Activated CD4-positive, alpha-beta T cell treated with anti-CD3 and anti-CD28 coated beads, Interleukin-2, amount 10 ng/mL, durations not matched to agents 24 days and 14 days (primary cell): ENCODE measurements at regions of chr12 and their contacts with region 1.

Region 1: GRCh38 chr12:51083126-51083833 is at the start of gene CSRNP2:
- DNase-seq: peak; percentile 98
- H3K4me3 Mint-ChIP-seq: peak within 1 kb of the TSS; percentile 95
- H3K27ac Mint-ChIP-seq: peak within 1 kb of the TSS; percentile 91
- H3K4me1 Mint-ChIP-seq: peaks cover 29% of the 10 kb centered on the region
- H3K27me3 Mint-ChIP-seq: no peaks in the 10 kb centered on the region
- total RNA-seq, gene CSRNP2: 22.7 and 22.9 TPM in 2 replicates

Region 2: DNA sequence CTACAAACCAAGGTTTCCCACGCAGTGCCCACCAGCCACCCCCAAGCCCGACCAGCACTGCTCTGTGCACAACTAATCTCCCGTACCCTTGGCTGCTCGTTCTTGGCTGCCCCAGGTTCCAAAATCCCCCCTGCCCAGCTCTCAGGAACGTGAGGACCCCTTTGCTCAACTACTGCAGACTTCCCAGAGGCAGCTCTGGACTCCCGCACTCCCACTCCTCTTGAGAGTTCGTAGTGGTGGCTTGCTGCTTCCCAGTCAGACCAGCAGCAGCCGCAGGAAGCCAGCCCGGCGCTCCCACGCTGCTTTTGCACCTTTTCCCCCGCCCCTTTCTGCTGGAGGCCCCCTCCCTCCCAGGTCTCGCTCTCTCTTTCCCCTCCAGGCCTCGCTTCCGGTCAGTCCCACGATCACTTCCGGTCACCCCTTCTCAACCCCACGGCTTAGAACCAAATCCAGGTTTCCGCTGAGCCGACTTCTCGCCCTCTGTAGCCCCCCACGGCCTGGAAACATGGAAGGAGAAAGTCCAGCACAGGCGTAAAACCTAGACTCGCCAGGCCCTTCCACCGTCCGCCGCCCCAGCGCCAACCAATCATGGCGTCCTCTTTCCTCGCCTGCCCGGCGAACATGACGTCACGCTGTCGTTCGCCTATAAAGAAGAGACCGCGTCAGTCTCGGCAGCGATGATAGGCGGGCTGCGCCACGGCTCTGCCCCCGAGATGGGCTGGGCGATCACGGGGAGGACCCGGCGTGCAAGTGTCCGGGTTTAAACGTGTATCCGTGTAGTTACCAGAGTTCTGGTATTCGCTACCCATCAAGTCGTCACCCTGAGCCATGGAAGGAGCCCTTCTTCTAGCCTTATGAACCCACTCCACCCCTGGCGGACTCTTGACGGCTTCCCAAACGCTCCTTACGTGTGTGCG is 89.5 kb after region 1 on chr12 and contains the start of gene TFCP2:
- intact Hi-C with region 1: loop called (anchors 2 kb)
- DNase-seq: peak; percentile 98
- H3K4me3 Mint-ChIP-seq: peak within 1 kb of the TSS; percentile 80
- H3K27ac Mint-ChIP-seq: peak within 1 kb of the TSS; percentile 86
- H3K4me1 Mint-ChIP-seq: peaks cover 12% of the 10 kb centered on the region
- H3K27me3 Mint-ChIP-seq: no peaks in the 10 kb centered on the region
- total RNA-seq, gene TFCP2: 43.1 and 46.3 TPM in 2 replicates

Region 3: GRCh38 chr12:51217968-51218606 is 134.8 kb after region 1 on chr12 and contains the start of gene POU6F1:
- intact Hi-C with region 1: loop called (anchors 5 kb)
- DNase-seq: peak; percentile 90
- H3K4me3 Mint-ChIP-seq: peak within 1 kb of the TSS; percentile 85
- H3K27ac Mint-ChIP-seq: peak within 1 kb of the TSS; percentile 88
- H3K4me1 Mint-ChIP-seq: peaks cover 13% of the 10 kb centered on the region
- H3K27me3 Mint-ChIP-seq: no peaks in the 10 kb centered on the region
- total RNA-seq, gene POU6F1: 5.1 and 9.0 TPM in 2 replicates

Region 4: DNA sequence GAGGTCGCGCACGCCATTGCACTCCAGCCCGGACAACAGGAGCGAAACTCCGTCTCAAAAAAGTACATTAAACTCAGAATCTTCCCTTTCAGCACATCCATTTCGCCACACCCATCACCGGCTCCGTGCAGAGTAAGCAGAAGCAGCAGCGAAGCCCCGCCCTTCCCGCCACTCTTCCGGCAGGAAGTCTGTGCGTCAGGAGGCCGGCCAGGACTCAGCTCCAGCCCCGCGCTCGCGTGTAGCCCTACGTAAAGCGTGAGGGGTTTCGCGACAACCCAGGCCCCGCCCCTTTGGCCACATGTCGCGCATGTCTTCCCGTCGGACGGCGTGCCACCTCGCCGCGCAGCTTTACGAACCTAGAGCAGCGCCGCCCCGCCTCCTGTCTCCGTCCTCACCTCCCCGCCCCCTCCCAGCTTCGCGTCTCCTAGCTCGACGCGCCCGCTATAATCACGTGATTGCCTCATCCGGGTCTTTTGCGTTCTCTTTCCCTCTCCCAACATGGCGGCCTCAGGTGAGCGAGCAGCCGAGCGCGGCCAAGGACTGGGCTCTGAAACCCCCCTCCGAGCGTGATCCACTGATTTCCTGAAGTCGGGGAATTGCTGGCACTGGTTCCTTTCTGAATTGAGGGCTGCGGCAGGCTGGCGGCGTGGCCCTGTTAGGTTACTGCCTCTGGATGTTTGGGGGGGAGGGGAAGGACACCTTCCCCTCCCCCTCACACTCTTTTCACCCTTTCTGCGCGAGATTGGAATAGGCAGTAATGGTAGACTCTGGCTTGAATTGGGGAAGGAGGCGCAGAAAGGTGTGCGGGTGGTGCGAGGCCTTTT is 1922.9 kb after region 1 on chr12 and contains the start of gene EIF4B:
- intact Hi-C with region 1: loop called (anchors 5 kb)
- DNase-seq: peak; percentile 100
- H3K4me3 Mint-ChIP-seq: peak within 1 kb of the TSS; percentile 88
- H3K27ac Mint-ChIP-seq: peak within 1 kb of the TSS; percentile 98
- H3K4me1 Mint-ChIP-seq: peaks cover 26% of the 10 kb centered on the region
- H3K27me3 Mint-ChIP-seq: peaks cover 4% of the 10 kb centered on the region
- total RNA-seq, gene EIF4B: 500 and 521 TPM in 2 replicates